Calu3 (cell line): ENCODE measurements at regions of chr6 and their contacts with region 1.

Region 1: DNA sequence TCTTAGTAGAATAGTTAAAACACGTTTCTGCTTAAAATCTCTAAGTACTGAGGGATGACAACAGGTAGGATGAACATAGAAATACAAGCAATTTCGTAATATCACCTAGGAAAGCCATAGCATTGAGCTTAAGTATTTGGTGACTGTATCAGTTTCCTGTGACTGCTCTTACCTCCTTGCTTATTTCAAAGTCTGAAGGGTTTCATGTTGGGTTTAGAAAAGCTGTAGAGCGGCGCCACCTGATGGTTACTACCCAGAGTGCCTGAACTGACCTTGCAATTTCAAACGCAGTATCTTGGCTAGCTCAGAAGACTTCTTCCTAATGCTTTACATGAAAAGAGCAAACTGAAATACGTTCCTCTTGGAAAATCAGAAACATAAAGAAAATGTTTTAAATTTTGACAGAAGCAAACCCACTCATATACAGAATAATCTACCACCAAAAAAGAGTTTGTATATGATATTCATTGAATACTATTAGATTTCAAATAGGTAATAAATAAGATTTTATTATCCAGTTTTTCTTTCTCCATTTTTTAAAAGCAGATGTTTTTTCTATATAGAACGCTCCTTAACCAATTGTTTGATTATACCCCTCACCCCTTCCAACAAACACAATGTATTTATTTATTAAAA is 82.3 kb upstream of the RIPOR2 start:
- DNase-seq: peak; percentile 90
- H3K4me3 Mint-ChIP-seq: no peak overlapping the region
- H3K27ac Mint-ChIP-seq: peak overlapping the region; percentile 10
- H3K4me1 Mint-ChIP-seq: peaks cover 28% of the 10 kb centered on the region
- H3K27me3 Mint-ChIP-seq: no peaks in the 10 kb centered on the region
- CTCF ChIP-seq: peak; percentile 95

Region 2: DNA sequence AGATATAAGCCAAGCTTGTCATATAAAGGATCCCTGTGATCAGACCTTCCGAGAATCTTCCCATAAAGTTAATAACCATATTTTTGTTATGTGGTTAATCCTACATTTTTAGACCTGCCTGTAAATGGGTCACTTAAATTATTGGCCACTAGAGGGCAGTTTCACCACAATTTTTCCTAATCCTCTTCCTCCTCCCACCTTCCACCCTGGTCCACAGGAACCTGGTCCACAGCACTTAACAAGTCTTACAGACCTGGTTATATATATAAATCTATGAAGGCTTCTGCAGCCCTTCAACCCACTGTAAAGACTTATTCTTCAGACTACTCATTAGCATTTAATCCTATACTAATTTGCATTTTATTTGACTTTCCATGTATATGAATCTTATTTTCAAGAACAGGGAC is 587.0 kb before region 1 on chr6:
- CTCF ChIA-PET with region 1: no interaction called
- intact Hi-C with region 1: loop called (anchors 5 kb)
- DNase-seq: peak; percentile 58
- H3K4me3 Mint-ChIP-seq: no peak overlapping the region
- H3K27ac Mint-ChIP-seq: no peak overlapping the region
- H3K4me1 Mint-ChIP-seq: peaks cover 9% of the 10 kb centered on the region
- H3K27me3 Mint-ChIP-seq: no peaks in the 10 kb centered on the region
- CTCF ChIP-seq: peak; percentile 93

Region 3: DNA sequence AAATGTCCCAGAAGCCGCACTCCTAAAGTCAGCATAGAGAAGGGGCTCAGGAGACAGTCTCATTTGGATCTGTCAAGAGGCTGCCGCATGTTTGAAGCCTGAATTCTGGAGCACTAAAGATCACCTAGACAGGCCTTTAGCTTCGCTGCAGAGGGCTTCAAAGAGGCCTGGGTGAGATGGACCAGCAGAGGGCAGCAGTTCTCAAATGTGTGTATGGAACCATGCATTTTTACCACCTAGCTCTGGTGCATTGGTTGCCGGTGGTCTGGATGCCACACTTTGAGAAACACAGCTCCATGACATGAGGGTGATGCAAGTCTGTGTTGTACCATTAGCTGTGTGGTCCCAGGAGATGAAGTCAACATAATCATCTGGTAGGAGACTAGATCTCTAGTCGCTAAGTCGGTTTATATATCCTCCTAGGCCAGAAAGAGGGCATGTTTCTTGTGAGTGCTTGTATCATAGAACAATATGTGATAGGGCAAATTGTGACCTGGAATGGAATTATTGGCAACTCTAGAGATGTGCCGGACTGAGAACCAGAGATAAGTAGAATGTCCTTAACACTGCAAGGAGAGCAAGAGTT is 436.9 kb before region 1 on chr6:
- CTCF ChIA-PET with region 1: interaction called, 12 read pairs
- intact Hi-C with region 1: no loop called
- DNase-seq: peak; percentile 93
- H3K4me3 Mint-ChIP-seq: no peak overlapping the region
- H3K27ac Mint-ChIP-seq: no peak overlapping the region
- H3K4me1 Mint-ChIP-seq: peaks cover 40% of the 10 kb centered on the region
- H3K27me3 Mint-ChIP-seq: no peaks in the 10 kb centered on the region
- CTCF ChIP-seq: peak; percentile 94

Region 4: GRCh38 chr6:24774696-24775519 is 243.1 kb before region 1 on chr6 and contains the start of gene GMNN:
- CTCF ChIA-PET with region 1: interaction called, 12 read pairs
- intact Hi-C with region 1: loop called (anchors 1 kb)
- DNase-seq: peak; percentile 100
- H3K4me3 Mint-ChIP-seq: peak within 1 kb of the TSS; percentile 96
- H3K27ac Mint-ChIP-seq: peak within 1 kb of the TSS; percentile 89
- H3K4me1 Mint-ChIP-seq: peaks cover 13% of the 10 kb centered on the region
- H3K27me3 Mint-ChIP-seq: no peaks in the 10 kb centered on the region
- CTCF ChIP-seq: no peak
- total RNA-seq, gene GMNN: 183 and 200 TPM in 2 replicates

Region 5: DNA sequence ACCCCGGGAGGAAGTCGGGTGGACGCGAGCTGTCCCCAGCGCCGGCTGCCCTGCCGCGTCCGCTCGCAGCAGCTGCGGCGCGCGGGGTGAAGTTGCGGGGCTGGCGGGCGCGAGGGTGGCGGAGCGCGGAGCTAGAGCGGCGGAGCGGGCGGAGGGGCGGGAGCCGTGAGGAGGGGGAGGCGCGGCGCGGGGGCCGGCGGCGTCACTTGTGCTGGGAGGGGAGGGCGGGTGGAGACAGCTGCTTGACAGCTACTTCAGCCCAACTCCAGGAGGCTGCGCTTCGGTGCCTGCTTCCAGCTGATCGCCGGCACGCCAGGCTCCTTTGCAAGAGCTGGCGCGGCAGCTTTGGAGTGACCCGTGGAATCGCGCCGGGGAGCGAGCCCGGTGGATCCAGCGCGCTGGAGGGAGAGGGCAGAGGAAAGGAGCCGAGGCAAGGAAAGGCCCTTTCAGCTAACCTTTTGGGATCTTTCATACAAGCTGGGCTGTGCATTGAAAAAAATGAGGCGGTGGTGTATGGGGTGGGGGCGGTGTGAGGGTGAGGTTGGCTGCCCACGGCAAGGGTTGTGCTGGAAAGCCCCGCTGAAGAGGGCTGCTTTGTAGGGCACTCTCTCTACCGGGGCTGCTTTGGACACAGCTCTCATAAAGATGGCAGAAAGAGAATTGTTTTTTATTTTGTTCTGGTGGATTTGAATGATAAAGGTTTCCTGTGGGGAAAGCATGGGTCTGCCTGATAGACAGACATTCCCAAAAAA is 106.9 kb before region 1 on chr6:
- CTCF ChIA-PET with region 1: interaction called, 25 read pairs
- intact Hi-C with region 1: no loop called
- DNase-seq: peak; percentile 55
- H3K4me3 Mint-ChIP-seq: peak overlapping the region; percentile 76
- H3K27ac Mint-ChIP-seq: no peak overlapping the region
- H3K4me1 Mint-ChIP-seq: peaks cover 7% of the 10 kb centered on the region
- H3K27me3 Mint-ChIP-seq: peaks cover 100% of the 10 kb centered on the region
- CTCF ChIP-seq: no peak

Region 6: GRCh38 chr6:25006565-25007001 is 11.5 kb before region 1 on chr6:
- CTCF ChIA-PET with region 1: interaction called, 22 read pairs
- intact Hi-C with region 1: no loop called
- DNase-seq: peak; percentile 58
- H3K4me3 Mint-ChIP-seq: no peak overlapping the region
- H3K27ac Mint-ChIP-seq: peak overlapping the region; percentile 9
- H3K4me1 Mint-ChIP-seq: peaks cover 59% of the 10 kb centered on the region
- H3K27me3 Mint-ChIP-seq: no peaks in the 10 kb centered on the region
- CTCF ChIP-seq: no peak

Region 7: GRCh38 chr6:25070547-25071366 is 52.7 kb after region 1 on chr6:
- CTCF ChIA-PET with region 1: interaction called, 32 read pairs
- intact Hi-C with region 1: loop called (anchors 1 kb)
- DNase-seq: peak; percentile 94
- H3K4me3 Mint-ChIP-seq: no peak overlapping the region
- H3K27ac Mint-ChIP-seq: no peak overlapping the region
- H3K4me1 Mint-ChIP-seq: no peaks in the 10 kb centered on the region
- H3K27me3 Mint-ChIP-seq: peaks cover 27% of the 10 kb centered on the region
- CTCF ChIP-seq: peak; percentile 100

Region 8: GRCh38 chr6:25147223-25147622 is 129.2 kb after region 1 on chr6:
- CTCF ChIA-PET with region 1: no interaction called
- intact Hi-C with region 1: no loop called
- DNase-seq: no peak
- H3K4me3 Mint-ChIP-seq: no peak overlapping the region
- H3K27ac Mint-ChIP-seq: no peak overlapping the region
- H3K4me1 Mint-ChIP-seq: no peaks in the 10 kb centered on the region
- H3K27me3 Mint-ChIP-seq: no peaks in the 10 kb centered on the region
- CTCF ChIP-seq: no peak